BJ (cell line): ENCODE measurements at regions of chr10 and their contacts with region 1.

Region 1: GRCh38 chr10:114682532-114682931 is 24.5 kb upstream of the ABLIM1 start:
- DNase-seq: no peak
- H3K4me3 ChIP-seq: no peak overlapping the region
- H3K27me3 ChIP-seq: no peaks in the 10 kb centered on the region
- CTCF ChIP-seq: no peak

Region 2: GRCh38 chr10:114631666-114632417 is 50.7 kb before region 1 on chr10:
- CTCF ChIA-PET with region 1: no interaction called
- POLR2A ChIA-PET with region 1: interaction called, 12 read pairs
- DNase-seq: no peak
- H3K4me3 ChIP-seq: peak overlapping the region; percentile 50
- H3K27me3 ChIP-seq: no peaks in the 10 kb centered on the region
- CTCF ChIP-seq: no peak

Region 3: DNA sequence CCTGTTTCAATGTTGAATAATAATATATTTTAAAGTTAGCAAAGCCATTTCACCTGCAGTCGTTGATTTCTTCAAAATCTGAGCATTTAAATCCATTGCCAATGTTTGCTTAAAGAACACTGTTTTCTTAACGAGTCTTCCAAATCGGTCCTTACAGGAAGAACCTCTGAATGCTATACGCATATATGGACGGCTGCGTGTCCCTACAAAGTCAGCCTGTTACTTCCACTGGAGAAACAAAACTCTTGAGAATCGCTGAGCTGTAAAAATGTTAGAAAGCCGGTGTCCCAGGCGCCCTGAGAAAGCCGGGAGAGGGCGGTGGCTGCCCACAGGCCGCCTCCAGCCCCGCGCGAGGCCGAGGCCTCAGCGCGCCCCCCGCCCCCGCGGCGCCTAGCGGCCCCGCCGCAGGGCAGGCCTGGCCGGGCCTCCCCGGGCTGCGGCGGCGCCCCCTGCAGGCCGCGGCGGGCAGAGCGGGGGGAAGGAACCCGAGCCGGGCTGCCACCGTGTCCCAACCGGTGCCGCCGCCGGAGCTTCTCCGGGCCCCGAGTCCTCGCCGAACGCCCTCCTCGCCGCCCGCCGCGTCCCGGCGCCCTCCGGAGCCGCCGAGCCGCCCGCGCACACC is 138.9 kb after region 1 on chr10 and contains the start of gene FHIP2A:
- CTCF ChIA-PET with region 1: no interaction called
- POLR2A ChIA-PET with region 1: no interaction called
- DNase-seq: no peak
- H3K4me3 ChIP-seq: peak within 1 kb of the TSS; percentile 86
- H3K27me3 ChIP-seq: no peaks in the 10 kb centered on the region
- CTCF ChIP-seq: peak; percentile 32; the same call in 1 of the 2 replicates
- polyA plus RNA-seq, gene FHIP2A: 13.4 and 22.2 TPM in 2 replicates